CD8-positive, alpha-beta T cell (primary cell): ENCODE measurements at regions of chr6 and their contacts with region 1.

Region 1: DNA sequence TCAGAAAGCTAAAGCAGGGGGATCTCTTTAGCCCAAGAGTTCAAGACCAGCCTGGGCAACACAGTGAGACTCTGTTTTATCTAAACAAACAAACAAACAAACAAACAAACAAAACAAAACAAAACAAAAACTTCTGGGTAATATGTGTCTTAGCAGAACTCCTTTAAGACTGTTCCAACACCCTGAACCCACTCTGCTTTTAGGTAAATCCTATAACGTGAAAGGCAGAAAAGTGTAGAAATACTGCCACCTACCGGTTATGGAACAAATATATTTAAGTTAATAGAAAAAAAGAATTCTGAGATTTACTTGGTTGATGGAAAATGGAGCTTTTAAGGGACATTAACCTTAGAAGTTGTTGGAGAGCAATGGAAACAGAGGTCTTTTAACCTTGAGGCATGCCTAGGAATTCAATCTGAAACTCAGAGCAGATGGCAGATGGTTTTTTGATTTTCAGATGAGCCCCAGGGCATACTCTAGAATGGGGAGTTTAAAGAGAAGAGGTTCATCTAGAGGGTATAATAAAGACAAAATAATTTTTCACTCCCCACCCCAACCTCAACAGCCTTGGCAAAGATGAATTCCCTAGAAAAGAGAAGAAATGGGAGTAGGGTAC is 38.5 kb downstream of the SOD2 start:
- DNase-seq: peak in 2 of 9 experiments; percentile 54 to 67
- ATAC-seq: no peak
- H3K4me3 ChIP-seq: no peak overlapping the region
- H3K4me3 Mint-ChIP-seq: no peak overlapping the region
- H3K27ac ChIP-seq: no peak overlapping the region
- H3K27ac Mint-ChIP-seq: no peak overlapping the region
- H3K4me1 ChIP-seq: no peaks in the 10 kb centered on the region
- H3K4me1 Mint-ChIP-seq: no peaks in the 10 kb centered on the region
- H3K27me3 ChIP-seq: no peaks in the 10 kb centered on the region
- H3K27me3 Mint-ChIP-seq: no peaks in the 10 kb centered on the region
- CTCF ChIP-seq: peak; percentile 92

Region 2: GRCh38 chr6:158869826-158870648 is 784.6 kb before region 1 on chr6:
- CTCF ChIA-PET with region 1: no interaction called
- POLR2A ChIA-PET with region 1: no interaction called
- intact Hi-C with region 1: no loop called
- DNase-seq: peak in 5 of 9 experiments; percentile 63 to 99 (median 94)
- ATAC-seq: peak; percentile 75
- H3K4me3 ChIP-seq: peak overlapping the region; percentile 57 to 61
- H3K4me3 Mint-ChIP-seq: peak overlapping the region; percentile 89
- H3K27ac ChIP-seq: peak overlapping the region; percentile 86 to 98
- H3K27ac Mint-ChIP-seq: peak overlapping the region; percentile 99
- H3K4me1 ChIP-seq: peaks cover 20% of the 10 kb centered on the region
- H3K4me1 Mint-ChIP-seq: peaks cover 34% of the 10 kb centered on the region
- H3K27me3 ChIP-seq: no peaks in the 10 kb centered on the region
- H3K27me3 Mint-ChIP-seq: no peaks in the 10 kb centered on the region
- CTCF ChIP-seq: no peak

Region 3: DNA sequence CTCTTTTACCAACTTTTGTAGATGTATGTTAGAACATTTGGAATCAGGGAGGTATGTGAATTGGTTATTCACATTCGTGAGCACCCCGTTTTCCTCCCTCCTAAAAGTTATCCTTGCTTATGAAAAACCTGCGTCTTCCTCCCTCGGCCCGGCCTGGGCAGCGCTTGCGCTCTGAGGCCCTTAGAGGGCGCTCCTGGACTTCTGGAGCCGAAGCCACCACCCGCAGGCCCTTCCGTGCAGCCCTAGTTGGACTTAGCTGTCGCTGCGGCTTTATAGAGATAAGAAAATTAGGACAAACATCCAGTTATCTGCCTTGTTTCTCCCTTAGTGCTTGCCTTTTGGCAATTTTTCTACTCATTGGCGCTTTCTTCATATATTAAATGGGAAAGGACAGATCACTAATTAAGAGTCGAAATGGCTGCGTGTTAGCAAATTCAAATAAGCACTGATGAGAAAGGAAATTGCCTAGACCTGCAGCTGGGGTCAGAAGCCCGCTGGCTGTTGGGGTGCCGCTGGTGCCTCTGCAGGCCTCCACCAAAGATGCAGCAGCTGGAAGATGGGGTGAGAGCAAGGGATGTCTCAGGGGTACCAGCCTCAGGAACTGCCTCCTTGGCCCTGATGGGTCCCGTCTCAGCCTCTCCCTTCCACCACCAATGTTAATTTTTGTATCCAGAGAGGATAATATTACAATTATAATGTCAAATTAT is 480.2 kb before region 1 on chr6:
- CTCF ChIA-PET with region 1: interaction called, 43 read pairs
- POLR2A ChIA-PET with region 1: no interaction called
- intact Hi-C with region 1: loop called (anchors 1 to 2 kb)
- DNase-seq: peak; percentile 34 to 72 (median 61)
- ATAC-seq: peak; percentile 75
- H3K4me3 ChIP-seq: no peak overlapping the region
- H3K4me3 Mint-ChIP-seq: peak overlapping the region; percentile 29
- H3K27ac ChIP-seq: no peak overlapping the region
- H3K27ac Mint-ChIP-seq: no peak overlapping the region
- H3K4me1 ChIP-seq: no peaks in the 10 kb centered on the region
- H3K4me1 Mint-ChIP-seq: peaks cover 11% of the 10 kb centered on the region
- H3K27me3 ChIP-seq: peaks cover 8 to 11% of the 10 kb centered on the region in 2 experiments
- H3K27me3 Mint-ChIP-seq: peaks cover 70% of the 10 kb centered on the region
- CTCF ChIP-seq: peak; percentile 83

Region 4: GRCh38 chr6:159252955-159253508 is 401.6 kb before region 1 on chr6:
- CTCF ChIA-PET with region 1: interaction called, 11 read pairs
- POLR2A ChIA-PET with region 1: no interaction called
- intact Hi-C with region 1: loop called in 1 of 2 experiments (anchors 5 kb)
- DNase-seq: peak in 2 of 9 experiments; percentile 23 to 45
- ATAC-seq: peak; percentile 54
- H3K4me3 ChIP-seq: no peak overlapping the region
- H3K4me3 Mint-ChIP-seq: no peak overlapping the region
- H3K27ac ChIP-seq: no peak overlapping the region
- H3K27ac Mint-ChIP-seq: no peak overlapping the region
- H3K4me1 ChIP-seq: no peaks in the 10 kb centered on the region
- H3K4me1 Mint-ChIP-seq: no peaks in the 10 kb centered on the region
- H3K27me3 ChIP-seq: no peaks in the 10 kb centered on the region
- H3K27me3 Mint-ChIP-seq: peaks cover 17% of the 10 kb centered on the region
- CTCF ChIP-seq: peak; percentile 33

Region 5: GRCh38 chr6:159642481-159642880 is 12.1 kb before region 1 on chr6:
- CTCF ChIA-PET with region 1: interaction called, 26 read pairs
- POLR2A ChIA-PET with region 1: no interaction called
- intact Hi-C with region 1: no loop called
- DNase-seq: no peak
- ATAC-seq: no peak
- H3K4me3 ChIP-seq: no peak overlapping the region
- H3K4me3 Mint-ChIP-seq: no peak overlapping the region
- H3K27ac ChIP-seq: no peak overlapping the region
- H3K27ac Mint-ChIP-seq: no peak overlapping the region
- H3K4me1 ChIP-seq: no peaks in the 10 kb centered on the region
- H3K4me1 Mint-ChIP-seq: no peaks in the 10 kb centered on the region
- H3K27me3 ChIP-seq: no peaks in the 10 kb centered on the region
- H3K27me3 Mint-ChIP-seq: no peaks in the 10 kb centered on the region
- CTCF ChIP-seq: no peak